ENCODE measurements at regions of chr15 and their contacts with region 1.

Region 1: GRCh38 chr15:63600616-63601025 is 3.4 kb downstream of the FBXL22 start:
- DNase-seq: peak; percentile 84
- H3K4me3 ChIP-seq: peak overlapping the region; percentile 71
- H3K27ac ChIP-seq: peak overlapping the region; percentile 91
- H3K4me1 ChIP-seq: peaks cover 10% of the 10 kb centered on the region
- H3K27me3 ChIP-seq: no peaks in the 10 kb centered on the region
- CTCF ChIP-seq: no peak

Region 2: GRCh38 chr15:63288778-63289378 is 311.7 kb before region 1 on chr15:
- intact Hi-C with region 1: loop called (anchors 10 kb)
- DNase-seq: no peak
- H3K4me3 ChIP-seq: no peak overlapping the region
- H3K27ac ChIP-seq: no peak overlapping the region
- H3K4me1 ChIP-seq: no peaks in the 10 kb centered on the region
- H3K27me3 ChIP-seq: no peaks in the 10 kb centered on the region
- CTCF ChIP-seq: peak; percentile 60

Region 3: GRCh38 chr15:63466378-63467192 is 134.0 kb before region 1 on chr15:
- intact Hi-C with region 1: loop called (anchors 5 kb)
- DNase-seq: peak; percentile 79
- H3K4me3 ChIP-seq: no peak overlapping the region
- H3K27ac ChIP-seq: no peak overlapping the region
- H3K4me1 ChIP-seq: peaks cover 28% of the 10 kb centered on the region
- H3K27me3 ChIP-seq: no peaks in the 10 kb centered on the region
- CTCF ChIP-seq: peak; percentile 50